GM18951 (cell line): ENCODE measurements at regions of chr12 and their contacts with region 1.

Region 1: GRCh38 chr12:113103756-113104450 is 31.7 kb downstream of the RASAL1 start:
- POLR2A ChIP-seq: no peak

Region 2: GRCh38 chr12:113049976-113050742 is 53.7 kb before region 1 on chr12:
- in situ Hi-C with region 1: loop called (anchors 10 kb)
- POLR2A ChIP-seq: no peak